ENCODE measurements at regions of chr7 and their contacts with region 1.

Region 1: DNA sequence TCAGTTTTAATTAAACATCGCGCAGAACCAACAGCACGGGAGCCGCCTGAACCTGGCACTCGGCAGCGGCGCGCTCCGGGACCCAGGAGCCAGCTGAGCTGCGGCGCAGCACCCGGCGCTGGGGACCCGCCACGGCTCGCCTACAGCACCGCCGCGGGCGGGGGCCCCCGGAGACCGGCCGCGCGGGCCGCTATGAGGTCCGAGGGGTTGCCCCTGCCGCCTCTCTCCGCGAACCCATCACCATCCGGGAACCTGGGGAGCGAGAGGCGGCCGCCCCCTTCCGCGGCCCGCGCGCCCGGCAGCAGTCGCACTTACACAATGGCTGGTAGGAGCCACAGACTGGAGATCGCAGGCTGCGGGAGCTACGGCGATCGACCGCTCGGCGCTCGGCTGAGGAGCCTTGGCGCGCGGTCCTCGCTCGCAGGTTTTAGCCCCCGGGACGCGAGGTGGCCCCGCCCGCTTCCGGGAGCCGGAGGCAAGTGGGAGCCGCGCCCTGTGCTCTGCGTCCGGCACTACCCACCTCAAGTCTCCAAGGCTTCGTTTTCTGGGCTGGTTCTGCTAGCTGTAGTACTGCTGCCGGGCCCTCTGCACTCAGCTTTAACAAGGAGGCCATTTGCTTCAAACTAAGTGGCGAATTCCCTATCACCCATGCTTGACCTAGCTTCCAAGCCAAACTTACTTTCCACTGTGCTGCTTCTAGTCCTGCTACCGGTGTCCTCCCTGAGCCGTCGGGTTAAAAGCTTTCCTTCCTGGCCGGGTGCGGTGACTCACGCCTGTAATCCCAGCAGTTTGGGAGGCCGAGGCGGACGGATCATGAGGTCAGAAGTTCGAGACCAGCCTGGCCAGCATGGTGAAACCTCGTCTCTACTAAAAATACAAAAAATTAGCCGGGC is at the start of gene TPK1:
- DNase-seq: peak; percentile 94
- ATAC-seq: peak; percentile 90
- H3K4me3 Mint-ChIP-seq: peak within 1 kb of the TSS; percentile 93
- H3K27ac Mint-ChIP-seq: peak within 1 kb of the TSS; percentile 99
- H3K4me1 Mint-ChIP-seq: peaks cover 30% of the 10 kb centered on the region
- H3K27me3 Mint-ChIP-seq: no peaks in the 10 kb centered on the region
- total RNA-seq, gene TPK1: 13.1 to 15.0 TPM

Region 2: DNA sequence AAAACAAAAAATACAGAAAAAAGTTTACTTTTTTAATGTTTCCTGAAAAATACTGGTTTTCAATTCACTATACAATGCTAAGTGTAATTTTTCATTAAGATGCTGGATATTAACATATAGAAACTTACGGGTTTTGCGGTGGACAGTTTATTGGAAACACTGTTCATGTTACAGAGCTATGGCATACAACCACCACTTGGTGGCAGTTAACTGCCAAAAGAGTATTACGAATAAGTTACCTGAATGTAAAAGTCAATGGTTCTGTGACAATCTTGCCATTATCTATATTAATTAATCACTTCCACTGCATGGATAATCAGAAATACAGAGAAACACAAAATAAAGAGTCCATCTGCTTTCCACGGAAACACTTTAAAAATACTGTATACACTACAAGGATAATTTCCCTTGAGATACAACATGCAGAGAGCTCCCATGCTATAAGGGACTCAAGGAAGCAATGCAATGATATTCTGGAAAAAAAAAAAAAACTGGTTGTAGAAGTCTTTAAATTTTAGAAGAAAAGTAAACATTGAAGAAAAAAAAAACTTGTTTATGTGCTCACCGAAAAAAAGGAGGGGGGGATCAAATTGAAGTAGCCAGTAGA is 97.1 kb before region 1 on chr7:
- CTCF ChIA-PET with region 1: interaction called, 10 read pairs
- DNase-seq: no peak
- ATAC-seq: peak; percentile 76
- H3K4me3 Mint-ChIP-seq: no peak overlapping the region
- H3K27ac Mint-ChIP-seq: no peak overlapping the region
- H3K4me1 Mint-ChIP-seq: peaks cover 3% of the 10 kb centered on the region
- H3K27me3 Mint-ChIP-seq: no peaks in the 10 kb centered on the region

Region 3: GRCh38 chr7:144786522-144786921 is 49.4 kb before region 1 on chr7:
- CTCF ChIA-PET with region 1: interaction called, 10 read pairs
- DNase-seq: no peak
- ATAC-seq: peak; percentile 58
- H3K4me3 Mint-ChIP-seq: no peak overlapping the region
- H3K27ac Mint-ChIP-seq: no peak overlapping the region
- H3K4me1 Mint-ChIP-seq: no peaks in the 10 kb centered on the region
- H3K27me3 Mint-ChIP-seq: no peaks in the 10 kb centered on the region

Region 4: DNA sequence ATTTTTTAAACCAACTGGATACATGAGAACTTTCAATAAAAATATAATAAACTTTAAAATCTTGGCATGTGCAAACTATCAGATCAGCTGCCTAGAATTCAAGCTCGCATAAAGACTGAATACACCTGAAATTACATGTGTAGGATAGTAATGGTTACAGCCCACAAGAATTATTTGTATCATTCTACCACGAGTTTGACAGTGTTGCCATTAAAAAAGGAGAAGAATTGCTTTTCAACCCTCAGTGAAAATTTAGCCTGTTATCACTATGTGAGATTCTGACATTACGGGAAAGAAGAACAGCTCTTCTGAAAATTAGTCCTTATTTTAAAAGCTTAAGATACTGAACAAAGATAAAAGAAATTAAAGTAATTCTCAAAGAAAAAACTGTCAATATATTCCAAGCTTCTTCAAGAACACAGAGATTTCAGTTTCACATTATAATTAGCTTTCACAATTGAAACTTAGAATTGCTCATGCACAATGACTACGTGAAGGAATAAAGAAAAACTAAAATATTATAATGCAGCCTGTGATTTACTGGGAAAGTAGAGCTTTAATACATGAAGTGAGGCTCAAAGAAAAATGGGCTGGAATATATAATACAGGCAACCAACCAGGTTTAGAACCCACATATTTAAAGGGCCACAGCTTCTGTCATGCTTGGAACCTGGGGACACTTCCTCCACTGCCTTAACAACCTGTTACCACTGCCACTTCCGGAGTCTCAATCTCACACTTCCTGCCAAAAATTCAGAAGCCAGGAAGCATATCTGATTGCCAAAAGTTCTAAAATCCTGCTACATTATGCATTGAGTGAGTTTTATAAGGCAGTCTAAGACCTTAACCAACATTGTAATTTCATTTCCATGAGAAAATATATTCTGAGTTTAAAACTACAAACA is 23.3 kb before region 1 on chr7:
- CTCF ChIA-PET with region 1: interaction called, 17 read pairs
- DNase-seq: peak; percentile 71
- ATAC-seq: peak; percentile 98
- H3K4me3 Mint-ChIP-seq: peak overlapping the region; percentile 54
- H3K27ac Mint-ChIP-seq: peak overlapping the region; percentile 81
- H3K4me1 Mint-ChIP-seq: peaks cover 33% of the 10 kb centered on the region
- H3K27me3 Mint-ChIP-seq: no peaks in the 10 kb centered on the region

Region 5: GRCh38 chr7:144818511-144818910 is 17.4 kb before region 1 on chr7:
- CTCF ChIA-PET with region 1: interaction called, 34 read pairs
- DNase-seq: peak; percentile 71
- ATAC-seq: peak; percentile 82
- H3K4me3 Mint-ChIP-seq: peak overlapping the region; percentile 11
- H3K27ac Mint-ChIP-seq: peak overlapping the region; percentile 70
- H3K4me1 Mint-ChIP-seq: peaks cover 59% of the 10 kb centered on the region
- H3K27me3 Mint-ChIP-seq: no peaks in the 10 kb centered on the region